ENCODE measurements at regions of chr11 and their contacts with region 1.

Region 1: DNA sequence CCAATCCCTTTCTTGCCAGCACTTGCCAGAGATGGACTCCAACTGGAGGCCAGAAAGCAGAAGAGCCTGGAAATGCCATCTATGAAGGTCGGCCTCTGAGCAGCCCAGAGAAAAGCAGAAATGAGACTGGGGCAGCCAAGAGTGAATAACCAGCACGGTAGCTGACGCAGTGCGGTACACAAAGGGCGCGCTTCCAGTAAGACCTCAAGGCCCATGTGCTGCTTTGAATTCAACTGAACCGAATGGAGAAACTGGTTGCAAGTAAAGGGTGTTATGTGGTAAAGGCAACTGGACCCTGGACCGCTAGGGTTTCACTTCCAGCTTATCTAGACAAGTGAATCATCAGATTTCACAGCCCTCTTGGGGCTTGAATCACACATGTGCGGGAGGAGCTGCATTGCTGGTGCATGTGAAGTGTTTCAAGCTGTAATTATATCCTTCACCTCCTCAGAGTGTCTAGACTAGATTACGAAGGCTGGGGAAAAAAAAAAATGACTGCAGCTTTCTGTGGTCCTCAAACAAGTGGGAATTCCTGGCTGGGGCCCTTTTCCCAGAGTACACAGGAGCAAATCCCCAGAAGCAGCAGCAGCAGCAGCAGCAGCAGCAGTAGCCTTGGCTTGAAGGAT is 128.9 kb downstream of the CCDC34 start:
- DNase-seq: peak; percentile 91
- ATAC-seq: peak; percentile 95
- H3K4me3 ChIP-seq: no peak overlapping the region
- H3K27ac ChIP-seq: peak overlapping the region; percentile 56
- H3K4me1 ChIP-seq: peaks cover 3% of the 10 kb centered on the region; the same call in 1 of the 2 replicates
- H3K27me3 ChIP-seq: no peaks in the 10 kb centered on the region
- CTCF ChIP-seq: 0 out of 6 replicates have a peak, but pooled peaks of 1 of the 3 experiments have one; percentile 6
- EP300 ChIP-seq: peak; percentile 94 to 97
- POLR2A ChIP-seq: no peak
- RAD21 ChIP-seq: no peak

Region 2: GRCh38 chr11:26621141-26621540 is 613.0 kb before region 1 on chr11:
- CTCF ChIA-PET with region 1: no interaction called
- POLR2A ChIA-PET with region 1: no interaction called
- RAD21 ChIA-PET with region 1: no interaction called
- SMC1A ChIA-PET with region 1: no interaction called
- in situ Hi-C with region 1: no loop called
- intact Hi-C with region 1: loop called (anchors 10 kb)
- DNase-seq: no peak
- ATAC-seq: peak; percentile 49
- H3K4me3 ChIP-seq: no peak overlapping the region
- H3K27ac ChIP-seq: no peak overlapping the region
- H3K4me1 ChIP-seq: no peaks in the 10 kb centered on the region
- H3K27me3 ChIP-seq: no peaks in the 10 kb centered on the region
- CTCF ChIP-seq: no peak
- EP300 ChIP-seq: no peak
- POLR2A ChIP-seq: no peak
- RAD21 ChIP-seq: no peak

Region 3: GRCh38 chr11:27196203-27196897 is 37.8 kb before region 1 on chr11:
- CTCF ChIA-PET with region 1: interaction called, 4 read pairs
- POLR2A ChIA-PET with region 1: interaction called, 3 read pairs
- RAD21 ChIA-PET with region 1: interaction called, 10 read pairs
- SMC1A ChIA-PET with region 1: interaction called, 9 read pairs
- in situ Hi-C with region 1: no loop called
- intact Hi-C with region 1: no loop called
- DNase-seq: no peak
- ATAC-seq: no peak
- H3K4me3 ChIP-seq: no peak overlapping the region
- H3K27ac ChIP-seq: no peak overlapping the region
- H3K4me1 ChIP-seq: no peaks in the 10 kb centered on the region
- H3K27me3 ChIP-seq: no peaks in the 10 kb centered on the region
- CTCF ChIP-seq: no peak
- EP300 ChIP-seq: no peak
- POLR2A ChIP-seq: no peak
- RAD21 ChIP-seq: no peak

Region 4: GRCh38 chr11:27255447-27255828 is 21.3 kb after region 1 on chr11:
- CTCF ChIA-PET with region 1: no interaction called
- POLR2A ChIA-PET with region 1: no interaction called
- RAD21 ChIA-PET with region 1: no interaction called
- SMC1A ChIA-PET with region 1: no interaction called
- in situ Hi-C with region 1: no loop called
- intact Hi-C with region 1: no loop called
- DNase-seq: no peak
- ATAC-seq: no peak
- H3K4me3 ChIP-seq: no peak overlapping the region
- H3K27ac ChIP-seq: no peak overlapping the region
- H3K4me1 ChIP-seq: no peaks in the 10 kb centered on the region
- H3K27me3 ChIP-seq: no peaks in the 10 kb centered on the region
- CTCF ChIP-seq: no peak
- EP300 ChIP-seq: no peak
- POLR2A ChIP-seq: no peak
- RAD21 ChIP-seq: no peak

Region 5: DNA sequence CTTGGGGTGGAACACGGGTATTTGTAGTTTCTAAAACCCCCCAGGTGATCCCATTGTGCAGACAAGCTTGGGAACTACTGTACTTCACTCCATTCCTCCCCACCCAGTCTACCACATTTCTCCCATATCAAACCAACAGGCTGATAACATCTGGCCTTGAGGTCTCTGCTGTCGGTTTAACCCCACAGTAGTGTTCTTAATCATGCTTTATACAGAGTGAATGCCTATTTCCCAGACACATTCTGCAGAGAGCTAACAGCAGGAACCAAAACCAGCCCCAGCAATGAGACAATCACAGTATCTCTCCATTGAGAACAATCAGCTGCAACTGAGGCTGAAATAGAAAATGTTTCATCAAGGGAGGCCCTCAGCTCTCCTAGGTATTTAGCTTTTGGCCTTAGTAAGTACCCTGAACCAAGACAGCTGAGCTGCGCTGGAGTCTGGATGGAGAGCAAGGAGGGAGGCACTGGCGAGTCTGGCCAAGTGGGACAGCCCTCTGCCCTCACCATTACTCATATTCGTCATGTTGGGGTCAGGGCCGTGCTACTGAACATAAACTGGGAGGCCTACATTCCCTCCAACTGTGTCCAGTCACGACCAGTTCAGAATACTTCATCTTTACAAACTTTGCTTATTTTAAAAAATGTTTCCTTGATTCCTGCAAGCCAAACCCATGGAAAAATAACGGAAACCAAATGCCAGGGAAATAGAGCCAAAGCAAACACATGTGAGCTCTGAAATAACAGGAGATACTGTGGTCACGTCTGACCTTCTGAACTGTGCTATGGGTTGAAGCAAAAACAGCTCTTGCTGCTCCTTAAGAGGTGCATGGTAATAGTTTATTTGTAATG is 47.8 kb after region 1 on chr11:
- CTCF ChIA-PET with region 1: interaction called, 9 read pairs
- POLR2A ChIA-PET with region 1: no interaction called
- RAD21 ChIA-PET with region 1: interaction called, 16 read pairs
- SMC1A ChIA-PET with region 1: interaction called, 19 read pairs
- in situ Hi-C with region 1: no loop called
- intact Hi-C with region 1: no loop called
- DNase-seq: peak; percentile 19
- ATAC-seq: peak; percentile 90
- H3K4me3 ChIP-seq: no peak overlapping the region
- H3K27ac ChIP-seq: no peak overlapping the region
- H3K4me1 ChIP-seq: no peaks in the 10 kb centered on the region
- H3K27me3 ChIP-seq: no peaks in the 10 kb centered on the region
- CTCF ChIP-seq: no peak
- EP300 ChIP-seq: 0 out of 4 replicates have a peak, but pooled peaks of 1 of the 2 experiments have one; percentile 30
- POLR2A ChIP-seq: no peak
- RAD21 ChIP-seq: no peak

Region 6: DNA sequence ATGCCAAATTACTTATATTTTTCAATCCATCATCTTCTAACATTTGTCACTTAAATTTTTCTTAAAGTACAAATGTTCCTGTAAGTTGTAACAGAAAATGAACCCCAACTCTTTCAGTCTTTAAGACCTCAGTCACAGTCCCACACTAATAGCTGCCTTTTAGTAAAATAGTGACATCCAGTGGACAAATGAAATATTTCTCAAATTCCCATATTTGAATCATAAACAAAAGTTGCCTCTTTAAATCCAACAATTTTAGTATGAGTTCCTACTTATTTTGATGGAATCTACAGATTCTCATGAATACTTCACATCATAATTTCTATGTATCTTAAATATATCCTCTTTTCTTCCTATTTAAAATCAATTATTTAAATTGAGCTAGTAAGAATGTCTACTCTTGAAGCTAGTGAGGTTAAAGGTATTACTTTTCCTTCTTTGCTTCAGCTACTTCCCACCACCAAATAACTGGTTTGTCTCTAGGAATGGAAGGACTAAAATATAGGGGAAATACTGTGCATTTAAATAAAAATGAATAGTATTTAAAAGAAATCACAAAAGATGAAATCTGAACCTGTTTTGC is 263.2 kb after region 1 on chr11:
- CTCF ChIA-PET with region 1: interaction called, 24 read pairs
- POLR2A ChIA-PET with region 1: interaction called, 3 read pairs
- RAD21 ChIA-PET with region 1: interaction called, 5 read pairs
- SMC1A ChIA-PET with region 1: interaction called, 19 read pairs
- in situ Hi-C with region 1: no loop called
- intact Hi-C with region 1: no loop called
- DNase-seq: no peak
- ATAC-seq: peak; percentile 86
- H3K4me3 ChIP-seq: no peak overlapping the region
- H3K27ac ChIP-seq: no peak overlapping the region
- H3K4me1 ChIP-seq: no peaks in the 10 kb centered on the region
- H3K27me3 ChIP-seq: no peaks in the 10 kb centered on the region
- CTCF ChIP-seq: peak; percentile 28 to 51 (median 30); a peak in 4 of 6 replicates
- EP300 ChIP-seq: no peak
- POLR2A ChIP-seq: no peak
- RAD21 ChIP-seq: peak; percentile 41; the same call in 1 of the 2 replicates

Measured in GM12878 (cell line).